Heart right ventricle (tissue), 16 donors: ENCODE measurements at regions of chr1 and their contacts with region 1.

Region 1: DNA sequence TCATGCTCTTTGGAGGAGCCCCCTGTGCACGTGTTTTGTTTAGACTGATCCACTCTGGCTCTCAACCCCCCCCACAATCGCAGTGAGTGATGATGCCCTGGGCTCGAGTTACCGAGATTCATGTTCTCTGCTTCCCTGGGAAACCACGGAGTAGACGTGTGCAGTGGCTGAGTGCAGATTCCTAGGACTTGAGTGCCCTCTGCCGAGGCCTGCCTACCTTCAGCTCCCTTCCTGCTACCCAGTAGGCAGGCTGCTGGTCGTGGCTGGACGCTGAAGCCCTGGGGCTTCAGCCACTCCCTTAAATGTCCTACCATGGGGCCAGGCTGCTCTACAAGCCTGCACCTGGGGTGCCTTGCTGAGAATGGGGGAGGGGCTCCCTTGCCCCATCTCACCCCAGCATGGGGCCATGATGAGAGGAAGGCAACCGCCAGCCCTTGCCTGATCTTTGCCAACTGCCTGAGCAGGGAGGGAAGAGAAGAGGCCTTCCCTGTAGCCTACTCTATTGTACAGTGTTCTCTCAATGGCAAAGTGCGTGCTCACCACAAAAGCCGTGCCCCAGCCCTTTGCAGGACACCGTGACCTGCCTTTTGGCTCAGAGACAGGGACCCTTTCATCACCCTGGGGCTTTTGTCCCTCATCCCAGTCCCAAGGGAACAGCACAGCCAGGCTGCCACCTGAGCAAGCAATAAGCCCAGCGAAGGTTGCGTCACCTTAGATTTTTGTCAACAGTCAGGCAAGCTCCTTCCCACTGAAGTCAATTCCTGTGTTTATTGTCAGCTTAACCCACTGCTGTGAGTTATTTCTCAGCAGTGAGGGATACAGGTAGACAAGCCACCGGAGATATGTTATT is 4.1 kb upstream of the GRIK3 start:
- DNase-seq: peak in 1 of 2 donors; percentile 10
- ATAC-seq: peak; percentile 36 to 78 (median 68)
- H3K4me3 ChIP-seq: no peak overlapping the region
- H3K27ac ChIP-seq: no peak overlapping the region
- H3K4me1 ChIP-seq: peaks cover 0 to 15% (median 3%) of the 10 kb centered on the region in 9 donors
- H3K27me3 ChIP-seq: peaks cover 10 to 98% (median 97%) of the 10 kb centered on the region in 7 donors
- CTCF ChIP-seq: peak in 7 of 9 donors; percentile 26 to 54 (median 47)

Region 2: DNA sequence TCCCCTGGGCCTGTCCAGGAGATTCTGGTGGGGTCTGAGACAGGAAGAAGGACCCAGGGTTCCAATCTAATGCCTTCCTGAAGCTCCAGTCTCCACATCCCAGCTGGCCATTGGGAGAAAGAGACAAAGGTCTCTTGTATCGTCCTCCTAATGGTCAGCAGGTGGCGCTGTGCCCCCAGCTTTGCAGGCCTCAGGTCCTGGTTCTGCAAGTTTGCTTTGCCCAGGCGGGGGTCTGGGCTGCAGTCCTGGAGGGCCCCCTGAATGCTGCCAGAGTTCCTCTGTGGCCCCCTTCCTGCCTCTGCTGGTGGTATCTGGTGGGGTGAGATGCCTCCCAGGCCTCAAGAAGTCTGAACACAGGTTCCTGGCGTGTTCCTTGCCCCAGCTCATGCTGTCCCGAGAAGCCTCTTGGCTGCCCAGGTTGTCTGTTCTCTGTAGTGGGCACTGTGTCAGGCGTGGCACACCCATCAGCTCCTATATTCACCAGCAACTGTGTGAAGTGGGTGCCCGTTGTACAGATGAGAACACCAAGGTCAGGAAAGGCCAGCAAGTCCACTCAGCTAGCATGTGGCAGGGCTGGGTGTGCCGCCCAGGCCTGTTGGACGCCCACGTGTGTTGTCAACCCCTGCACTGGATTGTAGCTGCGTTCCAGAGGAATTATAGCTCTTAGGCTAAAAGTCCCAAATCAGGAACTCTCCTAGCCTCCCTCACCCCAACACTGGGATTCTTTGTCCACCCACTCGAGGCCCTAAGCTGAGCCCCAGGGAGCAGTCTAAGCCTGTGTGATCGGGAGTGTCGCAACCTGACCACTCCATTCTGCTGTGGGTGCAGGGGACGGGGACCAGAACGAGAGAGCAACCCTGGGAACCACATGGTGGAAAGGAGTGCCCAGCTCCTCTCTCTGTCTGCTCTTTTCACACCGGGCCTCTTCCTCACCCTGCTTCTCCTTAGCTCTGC is 521.8 kb before region 1 on chr1:
- intact Hi-C with region 1: loop called in 1 of 10 experiments (anchors 5 kb)
- DNase-seq: no peak
- ATAC-seq: peak in 5 of 8 donors; percentile 39 to 77 (median 55)
- H3K4me3 ChIP-seq: no peak overlapping the region
- H3K27ac ChIP-seq: peak overlapping the region in 1 of 10 donors; percentile 8
- H3K4me1 ChIP-seq: no peaks in the 10 kb centered on the region
- H3K27me3 ChIP-seq: peaks cover 0 to 39% (median 8%) of the 10 kb centered on the region in 7 donors
- CTCF ChIP-seq: peak; percentile 48 to 88 (median 67)

Region 3: GRCh38 chr1:36576118-36576517 is 462.3 kb before region 1 on chr1:
- intact Hi-C with region 1: loop called in 3 of 10 experiments (anchors 5 to 10 kb)
- DNase-seq: peak; percentile 42 to 45
- ATAC-seq: peak; percentile 46 to 77 (median 70)
- H3K4me3 ChIP-seq: no peak overlapping the region
- H3K27ac ChIP-seq: no peak overlapping the region
- H3K4me1 ChIP-seq: no peaks in the 10 kb centered on the region
- H3K27me3 ChIP-seq: peaks cover 0 to 70% (median 59%) of the 10 kb centered on the region in 7 donors
- CTCF ChIP-seq: peak; percentile 45 to 86 (median 74)

Region 4: GRCh38 chr1:36703526-36704208 is 334.8 kb before region 1 on chr1:
- intact Hi-C with region 1: loop called in 8 of 10 experiments (anchors 1 to 10 kb)
- DNase-seq: peak; percentile 66 to 69
- ATAC-seq: peak; percentile 58 to 91 (median 84)
- H3K4me3 ChIP-seq: no peak overlapping the region
- H3K27ac ChIP-seq: no peak overlapping the region
- H3K4me1 ChIP-seq: peaks cover 0 to 7% (median 0%) of the 10 kb centered on the region in 9 donors
- H3K27me3 ChIP-seq: peaks cover 8 to 67% (median 47%) of the 10 kb centered on the region in 7 donors
- CTCF ChIP-seq: peak; percentile 54 to 86 (median 82)